Activated CD8-positive, alpha-beta memory T cell treated with anti-CD3 and anti-CD28 coated beads, Interleukin-2, amount 10 ng/mL, durations not matched to agents 7 days and 5 days (primary cell): ENCODE measurements at regions of chr14 and their contacts with region 1.

Region 1: GRCh38 chr14:65164068-65164824 is 61.9 kb upstream of the MAX start:
- DNase-seq: peak; percentile 48
- ATAC-seq: peak; percentile 68
- H3K4me3 Mint-ChIP-seq: no peak overlapping the region
- H3K27ac Mint-ChIP-seq: no peak overlapping the region
- H3K4me1 Mint-ChIP-seq: peaks cover 19% of the 10 kb centered on the region
- H3K27me3 Mint-ChIP-seq: no peaks in the 10 kb centered on the region

Region 2: GRCh38 chr14:65131301-65131701 is 32.9 kb before region 1 on chr14:
- CTCF ChIA-PET with region 1: no interaction called
- DNase-seq: no peak
- ATAC-seq: no peak
- H3K4me3 Mint-ChIP-seq: no peak overlapping the region
- H3K27ac Mint-ChIP-seq: no peak overlapping the region
- H3K4me1 Mint-ChIP-seq: peaks cover 2% of the 10 kb centered on the region
- H3K27me3 Mint-ChIP-seq: peaks cover 9% of the 10 kb centered on the region

Region 3: DNA sequence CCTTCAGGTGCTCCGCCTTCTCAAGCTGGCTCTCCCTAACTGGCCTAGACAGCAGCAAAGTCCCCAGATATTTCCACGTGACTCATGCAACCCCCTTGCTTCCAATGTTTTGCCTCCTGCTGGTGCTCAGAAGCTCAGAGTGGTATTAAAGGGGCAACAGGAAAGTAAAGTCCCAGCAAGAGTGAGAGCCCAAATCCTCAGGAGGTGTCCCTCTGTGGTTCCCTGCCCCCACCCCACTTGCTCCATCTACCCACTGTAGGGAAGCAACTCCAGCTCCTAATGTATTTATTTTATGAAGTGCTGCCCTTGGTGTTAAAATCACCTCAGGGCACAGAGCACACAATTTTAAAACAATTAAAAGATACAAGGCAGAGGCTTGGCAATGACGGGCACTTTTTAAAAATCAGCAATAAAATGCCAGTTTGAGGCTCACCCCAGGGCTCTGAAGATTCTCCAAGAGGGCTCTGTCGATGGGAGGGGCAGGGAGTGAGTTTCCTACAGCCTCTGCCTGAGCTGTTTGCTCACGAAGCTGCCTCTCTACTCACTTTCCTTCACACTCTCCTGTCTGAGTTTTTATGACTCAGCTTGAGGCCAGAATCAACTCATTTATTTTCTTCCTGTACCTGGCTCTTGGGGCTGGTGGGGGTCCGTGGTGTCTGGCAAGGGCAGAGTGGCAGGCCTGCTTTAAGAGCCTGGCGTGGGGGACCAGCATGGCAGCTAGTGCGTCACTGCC is 20.0 kb after region 1 on chr14:
- CTCF ChIA-PET with region 1: interaction called, 12 read pairs
- DNase-seq: peak; percentile 47
- ATAC-seq: peak; percentile 72
- H3K4me3 Mint-ChIP-seq: no peak overlapping the region
- H3K27ac Mint-ChIP-seq: no peak overlapping the region
- H3K4me1 Mint-ChIP-seq: peaks cover 34% of the 10 kb centered on the region
- H3K27me3 Mint-ChIP-seq: peaks cover 19% of the 10 kb centered on the region

Region 4: DNA sequence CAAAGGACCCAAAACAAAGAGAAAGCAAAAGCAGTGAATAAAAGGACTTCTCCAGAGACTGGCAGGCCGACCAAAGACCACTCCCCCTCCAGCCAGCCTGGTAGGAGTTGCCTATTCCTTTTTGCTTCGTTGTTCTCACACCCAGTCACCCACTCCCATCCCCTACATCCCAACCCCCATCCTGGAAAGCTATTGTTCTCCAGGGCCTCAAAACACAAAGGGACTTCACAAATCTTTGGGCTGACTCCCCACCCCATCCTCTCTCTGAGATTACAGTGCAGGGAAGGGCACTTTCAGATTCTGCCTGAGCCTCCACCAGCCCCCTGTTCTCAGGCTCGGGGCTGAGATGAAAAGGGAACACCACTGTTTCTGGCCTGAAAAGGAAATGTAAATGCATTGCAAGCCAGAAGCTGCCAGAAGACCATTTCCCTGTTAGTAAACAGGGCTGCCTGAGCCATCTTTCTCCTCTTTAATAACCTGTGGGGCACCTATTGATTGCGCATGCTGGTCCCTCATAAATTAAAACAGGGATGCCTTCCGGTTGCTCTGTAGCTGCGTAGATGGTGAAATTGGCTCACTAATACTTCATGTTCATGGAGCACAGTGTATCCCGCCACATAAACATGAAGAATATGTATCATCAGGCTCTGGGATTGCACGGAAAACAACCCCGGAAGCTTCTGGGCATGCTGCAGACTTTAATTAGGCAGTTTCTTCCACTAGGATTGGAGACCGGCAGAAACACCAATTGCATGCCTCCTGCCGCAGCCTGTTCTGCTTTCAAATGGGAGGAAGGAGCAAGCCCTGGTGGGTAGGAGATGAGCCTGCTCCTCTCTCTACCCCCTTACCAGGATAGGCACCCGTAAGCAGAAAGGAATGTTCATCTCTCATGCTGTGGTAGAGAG is 118.0 kb after region 1 on chr14:
- CTCF ChIA-PET with region 1: interaction called, 10 read pairs
- DNase-seq: peak; percentile 63
- ATAC-seq: peak; percentile 65
- H3K4me3 Mint-ChIP-seq: peak overlapping the region; percentile 74
- H3K27ac Mint-ChIP-seq: peak overlapping the region; percentile 96
- H3K4me1 Mint-ChIP-seq: peaks cover 34% of the 10 kb centered on the region
- H3K27me3 Mint-ChIP-seq: no peaks in the 10 kb centered on the region

Region 5: GRCh38 chr14:66070509-66071319 is 906.5 kb after region 1 on chr14:
- CTCF ChIA-PET with region 1: interaction called, 16 read pairs
- DNase-seq: peak; percentile 73
- ATAC-seq: peak; percentile 73
- H3K4me3 Mint-ChIP-seq: no peak overlapping the region
- H3K27ac Mint-ChIP-seq: no peak overlapping the region
- H3K4me1 Mint-ChIP-seq: peaks cover 1% of the 10 kb centered on the region
- H3K27me3 Mint-ChIP-seq: peaks cover 13% of the 10 kb centered on the region